CD4-positive, alpha-beta memory T cell (primary cell): ENCODE measurements at regions of chr1 and their contacts with region 1.

Region 1: GRCh38 chr1:39738622-39739366 is at the start of gene PPIE:
- DNase-seq: peak; percentile 83 to 90 (median 85)
- H3K4me3 ChIP-seq: peak within 1 kb of the TSS; percentile 89 to 97
- H3K4me3 Mint-ChIP-seq: peak within 1 kb of the TSS; percentile 96 to 99 (median 98)
- H3K27ac ChIP-seq: peak within 1 kb of the TSS; percentile 65
- H3K27ac Mint-ChIP-seq: peak within 1 kb of the TSS; percentile 87 to 99 (median 98)
- H3K4me1 ChIP-seq: peaks cover 22% of the 10 kb centered on the region
- H3K4me1 Mint-ChIP-seq: peaks cover 20 to 41% (median 29%) of the 10 kb centered on the region in 4 donors
- H3K27me3 ChIP-seq: no peaks in the 10 kb centered on the region
- H3K27me3 Mint-ChIP-seq: peaks cover 6 to 20% of the 10 kb centered on the region in 2 donors
- total RNA-seq, gene PPIE: 67.7 to 69.4 TPM

Region 2: GRCh38 chr1:39691262-39692151 is 47.3 kb before region 1 on chr1 and contains the start of gene HPCAL4:
- CTCF ChIA-PET with region 1: interaction called, 3 read pairs
- POLR2A ChIA-PET with region 1: interaction called, 28 read pairs
- intact Hi-C with region 1: loop called (anchors 5 kb)
- DNase-seq: peak; percentile 91 to 95 (median 93)
- H3K4me3 ChIP-seq: peak within 1 kb of the TSS; percentile 69 to 88
- H3K4me3 Mint-ChIP-seq: peak within 1 kb of the TSS; percentile 83 to 95 (median 87)
- H3K27ac ChIP-seq: peak within 1 kb of the TSS; percentile 65
- H3K27ac Mint-ChIP-seq: peak within 1 kb of the TSS; percentile 88 to 95 (median 92)
- H3K4me1 ChIP-seq: peaks cover 46% of the 10 kb centered on the region
- H3K4me1 Mint-ChIP-seq: peaks cover 19 to 48% (median 39%) of the 10 kb centered on the region in 4 donors
- H3K27me3 ChIP-seq: no peaks in the 10 kb centered on the region
- H3K27me3 Mint-ChIP-seq: no peaks in the 10 kb centered on the region
- total RNA-seq, gene HPCAL4: 31.8 to 32.4 TPM

Region 3: DNA sequence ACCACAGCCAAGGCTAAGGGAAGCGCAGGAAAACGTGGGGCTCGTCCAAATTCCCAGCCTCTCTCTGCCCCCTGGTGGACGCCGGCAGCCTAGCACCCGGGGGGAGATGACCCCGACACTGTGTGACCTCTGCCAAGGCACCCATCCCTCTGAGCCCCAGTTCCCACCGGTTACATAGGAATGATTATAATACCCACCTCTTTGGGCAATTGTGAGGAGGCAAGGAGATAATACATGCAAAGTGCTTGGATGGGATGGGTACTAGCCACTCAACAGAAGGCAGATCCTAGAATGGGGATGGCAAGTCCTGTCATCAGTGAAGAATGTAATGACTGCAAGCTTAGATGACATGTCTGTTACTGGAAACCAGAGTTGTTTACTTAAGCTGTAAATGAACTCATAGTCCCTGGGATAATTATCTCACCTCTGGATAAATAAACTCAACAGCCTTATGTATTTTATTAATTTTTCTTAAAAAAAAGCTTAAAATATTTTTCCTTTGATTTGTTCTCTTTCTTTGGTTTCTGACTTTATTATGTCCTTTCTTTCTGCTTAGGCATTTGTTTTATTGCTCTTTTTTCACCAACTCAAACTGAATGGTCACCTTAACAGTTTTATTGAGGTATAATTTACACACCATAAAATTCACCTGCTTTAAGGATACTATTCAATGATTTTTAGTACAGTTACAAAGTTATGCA is 61.1 kb after region 1 on chr1:
- CTCF ChIA-PET with region 1: interaction called, 25 read pairs
- POLR2A ChIA-PET with region 1: interaction called, 40 read pairs
- intact Hi-C with region 1: loop called (anchors 2 kb)
- DNase-seq: peak; percentile 46 to 65 (median 60)
- H3K4me3 ChIP-seq: peak overlapping the region in 1 of 2 donors; percentile 26
- H3K4me3 Mint-ChIP-seq: peak overlapping the region; percentile 59 to 84 (median 78)
- H3K27ac ChIP-seq: peak overlapping the region; percentile 57
- H3K27ac Mint-ChIP-seq: peak overlapping the region; percentile 8 to 97 (median 95)
- H3K4me1 ChIP-seq: peaks cover 8% of the 10 kb centered on the region
- H3K4me1 Mint-ChIP-seq: peaks cover 5 to 14% (median 11%) of the 10 kb centered on the region in 4 donors
- H3K27me3 ChIP-seq: no peaks in the 10 kb centered on the region
- H3K27me3 Mint-ChIP-seq: no peaks in the 10 kb centered on the region

Region 4: DNA sequence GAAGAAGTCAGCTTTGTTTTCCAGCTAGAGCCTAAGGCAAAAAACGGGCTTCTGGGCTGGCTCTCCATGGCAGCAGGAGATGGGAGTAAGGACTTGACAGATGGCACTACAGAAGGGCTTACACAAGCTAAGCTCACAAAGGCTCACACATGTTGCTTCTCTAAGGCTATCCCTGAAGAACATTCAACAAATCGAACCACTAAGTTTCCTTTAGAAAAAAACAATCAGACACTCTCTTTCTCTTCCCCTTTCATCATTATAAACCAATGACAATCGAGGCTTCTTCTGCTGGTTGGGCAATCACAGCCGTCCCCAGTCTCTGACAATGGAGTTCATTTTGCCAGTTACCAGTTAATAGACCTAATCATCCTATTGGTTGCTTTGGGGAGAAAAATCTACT is 104.0 kb after region 1 on chr1:
- CTCF ChIA-PET with region 1: no interaction called
- POLR2A ChIA-PET with region 1: no interaction called
- intact Hi-C with region 1: no loop called
- DNase-seq: no peak
- H3K4me3 ChIP-seq: no peak overlapping the region
- H3K4me3 Mint-ChIP-seq: peak overlapping the region in 3 of 8 donors; percentile 25 to 57 (median 37)
- H3K27ac ChIP-seq: peak overlapping the region; percentile 68
- H3K27ac Mint-ChIP-seq: peak overlapping the region; percentile 77 to 96 (median 93)
- H3K4me1 ChIP-seq: peaks cover 56% of the 10 kb centered on the region
- H3K4me1 Mint-ChIP-seq: peaks cover 46 to 66% (median 54%) of the 10 kb centered on the region in 4 donors
- H3K27me3 ChIP-seq: no peaks in the 10 kb centered on the region
- H3K27me3 Mint-ChIP-seq: no peaks in the 10 kb centered on the region